AG04450 (cell line): ENCODE measurements at regions of chr19 and their contacts with region 1.

Region 1: GRCh38 chr19:10864538-10864899 is 6.8 kb upstream of the CARM1 start:
- DNase-seq: peak; percentile 47
- H3K4me3 ChIP-seq: no peak overlapping the region
- H3K27ac ChIP-seq: no peak overlapping the region
- H3K27me3 ChIP-seq: no peaks in the 10 kb centered on the region
- CTCF ChIP-seq: peak; percentile 91

Region 2: DNA sequence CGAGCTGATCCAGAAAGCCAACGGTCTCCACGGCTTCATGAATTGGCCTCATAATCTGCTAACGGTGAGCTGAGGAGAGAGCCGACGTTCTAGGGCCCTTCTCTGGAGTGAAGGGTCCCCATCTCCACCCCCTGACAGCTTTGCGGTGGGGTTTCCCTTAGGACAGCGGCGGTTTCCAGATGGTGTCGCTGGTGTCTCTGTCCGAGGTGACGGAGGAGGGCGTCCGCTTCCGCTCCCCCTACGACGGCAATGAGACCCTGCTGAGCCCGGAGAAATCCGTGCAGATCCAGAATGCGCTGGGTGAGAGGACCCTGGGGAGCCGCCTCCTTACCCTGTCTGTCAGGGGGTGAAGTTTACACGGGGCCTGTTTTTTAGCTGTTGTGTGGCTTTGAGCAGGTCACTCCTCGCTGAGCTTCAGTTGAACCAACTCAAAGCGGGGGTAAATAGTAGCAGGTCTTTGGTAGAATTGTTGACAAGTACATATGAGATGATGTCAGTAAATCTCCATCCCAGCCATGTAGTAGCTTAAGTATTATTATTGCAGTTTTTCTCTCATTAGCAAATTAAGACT is 162.5 kb before region 1 on chr19:
- CTCF ChIA-PET with region 1: interaction called, 10 read pairs
- POLR2A ChIA-PET with region 1: no interaction called
- DNase-seq: no peak
- H3K4me3 ChIP-seq: peak overlapping the region; percentile 99
- H3K27ac ChIP-seq: peak overlapping the region; percentile 70
- H3K27me3 ChIP-seq: no peaks in the 10 kb centered on the region
- CTCF ChIP-seq: no peak

Region 3: GRCh38 chr19:10846500-10847202 is 17.9 kb before region 1 on chr19:
- CTCF ChIA-PET with region 1: interaction called, 116 read pairs
- POLR2A ChIA-PET with region 1: no interaction called
- DNase-seq: no peak
- H3K4me3 ChIP-seq: no peak overlapping the region
- H3K27ac ChIP-seq: no peak overlapping the region
- H3K27me3 ChIP-seq: peaks cover 4% of the 10 kb centered on the region
- CTCF ChIP-seq: no peak

Region 4: DNA sequence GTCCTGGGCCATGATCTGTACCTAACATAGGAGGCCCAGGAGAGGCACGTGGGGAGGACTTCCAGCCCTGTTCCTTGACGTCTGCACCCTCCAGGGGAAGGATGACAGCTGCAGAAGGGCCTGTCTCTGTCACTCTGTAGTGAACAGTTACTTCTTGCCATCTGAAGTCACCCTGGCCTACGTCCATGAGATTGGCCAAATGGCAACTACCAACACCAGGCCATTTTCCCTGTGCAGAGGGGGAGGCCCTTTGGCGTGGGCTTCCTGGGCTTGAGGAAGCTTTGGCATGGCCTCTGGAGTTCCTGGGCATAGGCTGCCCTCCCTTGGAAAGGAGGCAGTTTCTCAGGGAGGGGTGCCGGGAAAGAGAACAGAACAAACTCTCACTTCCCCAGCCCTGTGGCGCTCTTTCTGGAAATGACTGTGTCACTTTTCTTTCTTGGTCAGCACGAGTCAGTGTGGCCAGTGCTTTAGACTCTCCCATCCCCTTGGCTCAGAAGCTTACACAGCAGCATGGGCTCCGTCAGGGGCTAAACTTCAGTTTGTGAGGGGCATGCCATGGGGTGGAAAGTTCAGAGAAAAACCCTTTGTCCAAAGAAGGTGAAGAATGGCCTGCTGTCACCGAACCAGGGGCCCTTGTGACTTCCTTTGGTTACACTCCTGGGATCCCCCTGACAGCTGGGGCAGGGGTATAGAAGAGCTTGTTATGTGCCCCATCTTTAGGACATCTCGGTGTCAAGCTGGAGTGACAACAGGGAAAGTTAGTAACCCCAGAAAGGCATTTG is 12.1 kb after region 1 on chr19:
- CTCF ChIA-PET with region 1: interaction called, 21 read pairs
- POLR2A ChIA-PET with region 1: no interaction called
- DNase-seq: no peak
- H3K4me3 ChIP-seq: no peak overlapping the region
- H3K27ac ChIP-seq: no peak overlapping the region
- H3K27me3 ChIP-seq: no peaks in the 10 kb centered on the region
- CTCF ChIP-seq: no peak